ENCODE measurements at regions of chr19 and their contacts with region 1.

Region 1: GRCh38 chr19:18503971-18504885 is 17.6 kb downstream of the ELL start:
- H3K4me3 Mint-ChIP-seq: peak overlapping the region; percentile 52
- H3K27ac Mint-ChIP-seq: peak overlapping the region; percentile 86
- H3K4me1 Mint-ChIP-seq: peaks cover 100% of the 10 kb centered on the region
- H3K27me3 Mint-ChIP-seq: no peaks in the 10 kb centered on the region

Region 2: DNA sequence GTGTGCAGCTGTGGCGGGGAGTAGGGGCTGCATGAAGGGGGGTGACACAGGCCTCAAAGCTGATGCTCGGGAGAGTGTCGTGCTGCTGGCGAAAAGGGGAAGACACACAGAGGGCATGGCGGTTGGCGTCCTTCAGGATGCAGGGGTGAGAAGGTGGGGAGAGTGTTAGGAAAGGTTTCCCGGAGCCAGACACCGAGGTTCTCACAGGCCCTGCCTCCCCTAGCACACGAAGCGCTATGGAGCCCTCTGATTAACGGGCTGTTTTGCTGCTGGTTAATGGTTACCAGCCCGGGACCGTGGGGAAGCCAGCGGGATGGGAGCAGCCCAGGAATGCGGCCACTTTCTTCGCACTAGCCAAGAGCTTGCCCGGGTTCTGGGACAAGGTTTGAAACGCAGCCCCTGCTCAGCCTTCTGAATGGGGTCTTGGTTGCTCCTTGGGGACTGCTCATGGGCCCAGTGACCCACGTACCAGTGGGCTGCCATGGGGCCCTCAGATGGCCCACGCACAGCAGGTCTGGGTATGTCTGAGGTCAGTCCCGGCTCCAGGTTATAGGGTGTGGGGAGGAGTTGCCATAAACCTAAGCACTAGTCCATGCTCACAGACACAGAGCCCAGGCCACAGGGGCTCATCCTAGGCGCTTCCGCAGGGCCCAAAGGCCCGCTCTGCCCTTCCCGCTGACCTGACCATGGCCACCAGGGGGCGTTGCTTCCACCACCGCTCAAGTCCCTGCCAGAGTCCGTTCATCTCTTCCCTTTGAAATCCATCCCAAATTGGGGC is 35.0 kb before region 1 on chr19:
- intact Hi-C with region 1: loop called (anchors 5 kb)
- H3K4me3 Mint-ChIP-seq: no peak overlapping the region
- H3K27ac Mint-ChIP-seq: peak overlapping the region; percentile 38
- H3K4me1 Mint-ChIP-seq: peaks cover 79% of the 10 kb centered on the region
- H3K27me3 Mint-ChIP-seq: no peaks in the 10 kb centered on the region

Region 3: GRCh38 chr19:18488838-18489626 is 15.2 kb before region 1 on chr19:
- intact Hi-C with region 1: loop called (anchors 2 kb)
- H3K4me3 Mint-ChIP-seq: no peak overlapping the region
- H3K27ac Mint-ChIP-seq: peak overlapping the region; percentile 8
- H3K4me1 Mint-ChIP-seq: peaks cover 91% of the 10 kb centered on the region
- H3K27me3 Mint-ChIP-seq: no peaks in the 10 kb centered on the region